ENCODE measurements at regions of chr4 and their contacts with region 1.

Region 1: DNA sequence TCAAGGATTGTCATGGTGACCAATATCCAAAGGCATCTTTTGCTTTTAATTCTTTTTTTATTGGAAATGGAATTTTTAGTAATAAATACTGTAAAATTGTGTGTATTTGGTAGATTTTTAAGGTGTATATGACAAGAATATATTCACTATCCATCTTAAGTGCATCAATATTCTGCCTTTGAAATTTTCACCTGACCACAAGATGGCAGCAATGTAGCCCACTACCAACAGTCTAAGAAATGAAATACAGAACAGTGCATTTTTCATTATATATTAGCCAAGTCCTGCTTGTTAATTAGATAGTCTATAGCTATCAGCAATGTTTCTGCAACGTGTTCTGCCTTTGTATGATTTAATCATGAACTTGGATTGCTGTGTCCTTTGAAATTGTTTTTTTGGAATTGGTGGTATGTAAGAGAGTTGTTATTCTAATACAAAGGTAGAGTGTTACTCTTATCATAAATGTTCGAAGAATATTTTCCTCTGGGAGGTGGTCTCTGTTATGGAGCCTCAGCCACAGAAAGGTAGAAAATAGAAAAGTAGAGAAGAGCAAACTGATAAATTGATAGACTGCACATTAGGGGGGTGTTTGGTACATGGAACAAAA is 38.2 kb downstream of the HPGDS start:
- DNase-seq: peak; percentile 27
- ATAC-seq: peak; percentile 69
- H3K4me3 ChIP-seq: no peak overlapping the region
- H3K27ac ChIP-seq: no peak overlapping the region
- H3K4me1 ChIP-seq: no peaks in the 10 kb centered on the region
- H3K27me3 ChIP-seq: no peaks in the 10 kb centered on the region
- CTCF ChIP-seq: peak; percentile 53 to 74 (median 64); a peak in 5 of 6 replicates
- POLR2A ChIP-seq: no peak
- RAD21 ChIP-seq: peak; percentile 76

Region 2: GRCh38 chr4:94390804-94391410 is 86.4 kb after region 1 on chr4:
- CTCF ChIA-PET with region 1: no interaction called
- POLR2A ChIA-PET with region 1: no interaction called
- RAD21 ChIA-PET with region 1: no interaction called
- intact Hi-C with region 1: loop called (anchors 1 kb)
- DNase-seq: no peak
- ATAC-seq: peak; percentile 61; the same call in 1 of the 2 replicates
- H3K4me3 ChIP-seq: no peak overlapping the region
- H3K27ac ChIP-seq: no peak overlapping the region
- H3K4me1 ChIP-seq: no peaks in the 10 kb centered on the region
- H3K27me3 ChIP-seq: no peaks in the 10 kb centered on the region
- CTCF ChIP-seq: peak; percentile 40 to 67 (median 52); a peak in 5 of 6 replicates
- POLR2A ChIP-seq: no peak
- RAD21 ChIP-seq: peak; percentile 54

Region 3: GRCh38 chr4:94595879-94596483 is 291.5 kb after region 1 on chr4:
- CTCF ChIA-PET with region 1: no interaction called
- POLR2A ChIA-PET with region 1: no interaction called
- RAD21 ChIA-PET with region 1: no interaction called
- intact Hi-C with region 1: loop called (anchors 1 kb)
- DNase-seq: peak; percentile 32
- ATAC-seq: peak; percentile 74
- H3K4me3 ChIP-seq: no peak overlapping the region
- H3K27ac ChIP-seq: no peak overlapping the region
- H3K4me1 ChIP-seq: no peaks in the 10 kb centered on the region; a peak in 1 of 4 replicates
- H3K27me3 ChIP-seq: no peaks in the 10 kb centered on the region
- CTCF ChIP-seq: peak; percentile 38 to 74 (median 63); a peak in 5 of 6 replicates
- POLR2A ChIP-seq: no peak
- RAD21 ChIP-seq: peak; percentile 86

Region 4: GRCh38 chr4:94728056-94728766 is 423.7 kb after region 1 on chr4:
- CTCF ChIA-PET with region 1: no interaction called
- POLR2A ChIA-PET with region 1: no interaction called
- RAD21 ChIA-PET with region 1: no interaction called
- intact Hi-C with region 1: loop called (anchors 10 kb)
- DNase-seq: no peak
- ATAC-seq: no peak
- H3K4me3 ChIP-seq: no peak overlapping the region
- H3K27ac ChIP-seq: no peak overlapping the region
- H3K4me1 ChIP-seq: no peaks in the 10 kb centered on the region
- H3K27me3 ChIP-seq: no peaks in the 10 kb centered on the region
- CTCF ChIP-seq: no peak
- POLR2A ChIP-seq: no peak
- RAD21 ChIP-seq: no peak

Region 5: GRCh38 chr4:95114521-95114920 is 810.1 kb after region 1 on chr4:
- CTCF ChIA-PET with region 1: no interaction called
- POLR2A ChIA-PET with region 1: no interaction called
- RAD21 ChIA-PET with region 1: no interaction called
- intact Hi-C with region 1: loop called (anchors 10 kb)
- DNase-seq: no peak
- ATAC-seq: no peak
- H3K4me3 ChIP-seq: no peak overlapping the region
- H3K27ac ChIP-seq: no peak overlapping the region
- H3K4me1 ChIP-seq: no peaks in the 10 kb centered on the region
- H3K27me3 ChIP-seq: no peaks in the 10 kb centered on the region
- CTCF ChIP-seq: no peak
- POLR2A ChIP-seq: no peak
- RAD21 ChIP-seq: no peak